GM10248 (cell line): ENCODE measurements at regions of chr3 and their contacts with region 1.

Region 1: GRCh38 chr3:186162221-186162620 is 53.3 kb upstream of the ETV5 start:
- DNase-seq: peak; percentile 28
- CTCF ChIP-seq: no peak

Region 2: GRCh38 chr3:185852635-185853034 is 309.6 kb before region 1 on chr3:
- CTCF ChIA-PET with region 1: no interaction called
- POLR2A ChIA-PET with region 1: no interaction called
- DNase-seq: no peak
- CTCF ChIP-seq: no peak

Region 3: DNA sequence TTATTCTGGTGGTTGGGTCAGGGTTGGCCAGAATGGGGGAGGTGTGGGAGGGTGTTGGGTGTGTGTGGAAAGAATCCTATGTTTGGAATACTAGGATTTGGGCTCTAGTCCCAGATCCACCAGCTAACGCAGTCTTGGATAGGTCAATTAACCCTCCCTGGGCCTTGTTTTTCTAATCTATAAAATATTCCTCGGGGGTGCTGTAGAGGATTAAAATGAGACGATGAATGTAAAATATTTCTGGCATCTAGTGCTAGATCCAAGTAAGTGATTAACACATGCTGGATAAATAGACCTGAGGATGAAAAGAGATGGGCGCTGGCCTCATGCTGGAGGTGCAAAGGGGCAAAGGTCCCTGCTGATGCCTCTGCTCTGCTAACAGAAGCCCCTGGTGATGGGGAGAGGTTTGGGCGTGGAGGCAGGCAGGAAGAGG is 14.3 kb after region 1 on chr3:
- CTCF ChIA-PET with region 1: interaction called, 14 read pairs
- POLR2A ChIA-PET with region 1: no interaction called
- DNase-seq: no peak
- CTCF ChIP-seq: no peak